CD4-positive, alpha-beta memory T cell (primary cell): ENCODE measurements at regions of chr18 and their contacts with region 1.

Region 1: GRCh38 chr18:54269893-54270844 is 852 bp downstream of the POLI start:
- DNase-seq: peak in 4 of 5 donors; percentile 37 to 45 (median 40)
- H3K4me3 ChIP-seq: peak overlapping the region; percentile 70 to 86
- H3K4me3 Mint-ChIP-seq: peak overlapping the region; percentile 90 to 98 (median 93)
- H3K27ac ChIP-seq: peak overlapping the region; percentile 77
- H3K27ac Mint-ChIP-seq: peak overlapping the region; percentile 88 to 100 (median 99)
- H3K4me1 ChIP-seq: peaks cover 18% of the 10 kb centered on the region
- H3K4me1 Mint-ChIP-seq: peaks cover 11 to 35% (median 19%) of the 10 kb centered on the region in 4 donors
- H3K27me3 ChIP-seq: no peaks in the 10 kb centered on the region
- H3K27me3 Mint-ChIP-seq: no peaks in the 10 kb centered on the region

Region 2: GRCh38 chr18:54119524-54120019 is 150.6 kb before region 1 on chr18:
- CTCF ChIA-PET with region 1: interaction called, 4 read pairs
- POLR2A ChIA-PET with region 1: no interaction called
- intact Hi-C with region 1: loop called (anchors 1 kb)
- DNase-seq: peak; percentile 23 to 49 (median 35)
- H3K4me3 ChIP-seq: no peak overlapping the region
- H3K4me3 Mint-ChIP-seq: peak overlapping the region in 2 of 8 donors; percentile 22 to 67
- H3K27ac ChIP-seq: no peak overlapping the region
- H3K27ac Mint-ChIP-seq: no peak overlapping the region
- H3K4me1 ChIP-seq: no peaks in the 10 kb centered on the region
- H3K4me1 Mint-ChIP-seq: peaks cover 0 to 3% (median 2%) of the 10 kb centered on the region in 4 donors
- H3K27me3 ChIP-seq: no peaks in the 10 kb centered on the region
- H3K27me3 Mint-ChIP-seq: peaks cover 0 to 3% of the 10 kb centered on the region in 2 donors

Region 3: GRCh38 chr18:54173980-54174630 is 96.1 kb before region 1 on chr18:
- CTCF ChIA-PET with region 1: interaction called, 4 read pairs
- POLR2A ChIA-PET with region 1: no interaction called
- intact Hi-C with region 1: loop called (anchors 1 kb)
- DNase-seq: no peak
- H3K4me3 ChIP-seq: no peak overlapping the region
- H3K4me3 Mint-ChIP-seq: no peak overlapping the region
- H3K27ac ChIP-seq: no peak overlapping the region
- H3K27ac Mint-ChIP-seq: peak overlapping the region in 6 of 7 donors; percentile 52 to 78 (median 64)
- H3K4me1 ChIP-seq: no peaks in the 10 kb centered on the region
- H3K4me1 Mint-ChIP-seq: peaks cover 21 to 26% (median 24%) of the 10 kb centered on the region in 4 donors
- H3K27me3 ChIP-seq: no peaks in the 10 kb centered on the region
- H3K27me3 Mint-ChIP-seq: no peaks in the 10 kb centered on the region

Region 4: DNA sequence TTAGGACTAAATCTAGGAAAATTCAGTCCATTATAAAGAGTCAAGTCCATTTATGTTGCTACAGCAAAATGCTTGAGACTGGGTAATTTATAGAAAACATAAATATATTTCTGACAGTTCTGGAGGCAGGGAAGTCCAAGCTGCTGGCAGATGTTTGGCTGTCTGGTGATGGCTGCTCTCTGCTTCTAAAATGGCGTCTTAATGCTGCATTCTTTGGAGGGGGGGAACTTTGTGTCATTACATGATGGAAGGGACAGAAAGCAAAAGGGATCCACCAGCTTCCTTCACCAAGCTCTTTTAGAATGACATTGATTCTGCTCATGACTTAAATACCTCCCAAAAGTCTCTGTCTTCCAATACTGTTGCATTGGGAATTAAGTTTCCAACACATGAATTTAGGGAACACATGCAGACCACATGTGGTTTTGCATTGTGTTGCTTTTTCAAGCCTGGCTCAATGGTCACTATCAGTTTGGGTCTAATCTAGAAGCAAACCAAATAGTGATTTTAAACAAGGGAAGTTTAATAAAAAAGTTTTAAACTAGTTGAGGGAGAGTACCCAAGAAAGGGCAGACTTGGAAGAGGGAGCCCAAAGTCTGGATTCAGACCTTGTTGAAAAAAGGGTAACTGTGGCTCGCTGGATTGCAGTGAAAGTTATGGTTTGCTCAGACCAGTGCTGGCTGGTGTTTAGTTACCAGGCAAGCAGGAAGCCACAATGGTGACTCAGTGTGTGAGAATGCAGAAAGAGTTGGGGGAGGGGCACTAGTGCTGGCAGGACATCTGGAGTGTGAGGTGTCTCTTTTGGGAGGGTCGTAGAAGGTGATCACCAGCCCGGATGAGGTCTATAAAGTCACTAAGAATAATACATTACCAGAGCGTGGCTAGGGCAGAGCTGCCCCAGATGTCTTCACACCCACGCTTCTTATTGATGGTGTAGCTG is 118.3 kb after region 1 on chr18:
- CTCF ChIA-PET with region 1: no interaction called
- POLR2A ChIA-PET with region 1: no interaction called
- intact Hi-C with region 1: no loop called
- DNase-seq: no peak
- H3K4me3 ChIP-seq: no peak overlapping the region
- H3K4me3 Mint-ChIP-seq: no peak overlapping the region
- H3K27ac ChIP-seq: no peak overlapping the region
- H3K27ac Mint-ChIP-seq: peak overlapping the region in 3 of 7 donors; percentile 6 to 61 (median 15)
- H3K4me1 ChIP-seq: no peaks in the 10 kb centered on the region
- H3K4me1 Mint-ChIP-seq: peaks cover 0 to 12% (median 4%) of the 10 kb centered on the region in 4 donors
- H3K27me3 ChIP-seq: no peaks in the 10 kb centered on the region
- H3K27me3 Mint-ChIP-seq: peaks cover 2 to 11% of the 10 kb centered on the region in 2 donors